ENCODE measurements at regions of chr3 and their contacts with region 1.

Region 1: GRCh38 chr3:106309274-106309673 is 440.5 kb upstream of the CBLB start:
- DNase-seq: no peak
- H3K4me3 Mint-ChIP-seq: no peak overlapping the region
- H3K27ac Mint-ChIP-seq: no peak overlapping the region
- H3K4me1 Mint-ChIP-seq: no peaks in the 10 kb centered on the region
- H3K27me3 Mint-ChIP-seq: no peaks in the 10 kb centered on the region
- CTCF ChIP-seq: no peak

Region 2: DNA sequence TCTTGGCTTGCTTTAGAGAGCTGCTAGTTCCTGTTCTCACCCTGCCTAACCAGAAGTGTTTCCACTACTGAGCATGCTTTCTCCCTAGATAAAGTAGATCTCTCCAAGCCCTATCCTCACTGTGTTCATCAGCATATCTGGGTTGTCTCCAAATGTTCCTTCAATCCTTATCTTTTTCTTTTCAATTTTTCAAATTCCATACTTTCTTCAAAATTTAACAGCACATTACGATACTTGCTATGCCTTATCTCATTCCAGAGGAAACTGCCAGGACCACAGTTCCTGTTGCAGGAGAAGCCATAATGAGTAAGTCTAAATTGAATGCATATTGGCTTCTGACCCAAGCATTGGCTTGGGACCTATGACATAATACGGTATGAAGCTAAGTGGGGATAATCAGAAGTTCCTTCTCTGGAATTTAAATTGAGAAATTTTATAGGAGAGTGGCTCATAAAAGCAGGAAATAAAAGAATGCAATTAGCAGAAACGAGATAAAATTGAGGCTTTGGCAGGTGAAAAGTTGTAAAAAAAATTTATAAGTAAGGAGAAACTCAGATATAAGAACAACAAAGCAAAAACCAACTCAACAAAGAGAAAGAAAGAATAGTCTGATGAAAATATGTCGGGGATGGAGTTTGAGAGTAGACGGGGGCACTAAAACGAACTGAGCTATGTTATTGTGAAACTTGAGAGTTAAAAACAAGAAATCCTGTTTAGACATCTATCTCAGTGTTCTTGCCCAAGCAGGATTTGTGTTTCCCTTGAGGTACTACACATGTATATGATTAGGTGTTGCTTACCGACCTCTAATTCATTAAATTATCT is 436.3 kb after region 1 on chr3:
- CTCF ChIA-PET with region 1: interaction called, 11 read pairs
- intact Hi-C with region 1: no loop called
- DNase-seq: no peak
- H3K4me3 Mint-ChIP-seq: no peak overlapping the region
- H3K27ac Mint-ChIP-seq: peak overlapping the region; percentile 75
- H3K4me1 Mint-ChIP-seq: peaks cover 16% of the 10 kb centered on the region
- H3K27me3 Mint-ChIP-seq: no peaks in the 10 kb centered on the region
- CTCF ChIP-seq: no peak